Activated CD4-positive, alpha-beta T cell treated with anti-CD3 and anti-CD28 coated beads for 36 hours (primary cell): ENCODE measurements at regions of chr6 and their contacts with region 1.

Region 1: GRCh38 chr6:68876792-68877493 is 241.9 kb downstream of the ADGRB3 start:
- DNase-seq: no peak
- ATAC-seq: no peak
- H3K4me3 Mint-ChIP-seq: no peak overlapping the region
- H3K27ac Mint-ChIP-seq: no peak overlapping the region
- H3K4me1 Mint-ChIP-seq: no peaks in the 10 kb centered on the region
- H3K27me3 Mint-ChIP-seq: no peaks in the 10 kb centered on the region

Region 2: GRCh38 chr6:68967549-68968300 is 90.8 kb after region 1 on chr6:
- CTCF ChIA-PET with region 1: no interaction called
- POLR2A ChIA-PET with region 1: no interaction called
- intact Hi-C with region 1: loop called in 1 of 2 experiments (anchors 2 kb)
- DNase-seq: peak; percentile 74
- ATAC-seq: peak; percentile 68
- H3K4me3 Mint-ChIP-seq: no peak overlapping the region
- H3K27ac Mint-ChIP-seq: no peak overlapping the region
- H3K4me1 Mint-ChIP-seq: peaks cover 11% of the 10 kb centered on the region
- H3K27me3 Mint-ChIP-seq: no peaks in the 10 kb centered on the region

Region 3: DNA sequence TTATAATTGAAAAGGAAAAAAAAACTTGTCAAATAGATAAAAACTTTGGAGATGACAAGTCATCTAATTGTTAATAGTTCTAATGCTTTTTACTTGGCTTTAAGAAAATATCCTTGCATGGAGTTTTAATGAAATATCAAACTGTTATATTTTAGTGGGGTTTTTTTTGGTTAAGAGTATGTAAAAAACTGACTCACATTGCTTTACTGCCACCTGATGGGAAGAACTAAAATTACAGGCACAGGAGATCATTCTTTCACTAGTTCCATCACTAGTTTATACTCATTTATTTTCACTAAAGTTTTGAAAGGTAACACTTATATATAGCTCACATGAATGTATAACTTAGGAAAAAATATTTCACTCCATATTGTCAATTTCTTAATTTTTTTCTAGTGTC is 610.7 kb after region 1 on chr6:
- CTCF ChIA-PET with region 1: no interaction called
- POLR2A ChIA-PET with region 1: no interaction called
- intact Hi-C with region 1: loop called in 1 of 2 experiments (anchors 5 kb)
- DNase-seq: no peak
- ATAC-seq: no peak
- H3K4me3 Mint-ChIP-seq: no peak overlapping the region
- H3K27ac Mint-ChIP-seq: no peak overlapping the region
- H3K4me1 Mint-ChIP-seq: no peaks in the 10 kb centered on the region
- H3K27me3 Mint-ChIP-seq: no peaks in the 10 kb centered on the region

Region 4: DNA sequence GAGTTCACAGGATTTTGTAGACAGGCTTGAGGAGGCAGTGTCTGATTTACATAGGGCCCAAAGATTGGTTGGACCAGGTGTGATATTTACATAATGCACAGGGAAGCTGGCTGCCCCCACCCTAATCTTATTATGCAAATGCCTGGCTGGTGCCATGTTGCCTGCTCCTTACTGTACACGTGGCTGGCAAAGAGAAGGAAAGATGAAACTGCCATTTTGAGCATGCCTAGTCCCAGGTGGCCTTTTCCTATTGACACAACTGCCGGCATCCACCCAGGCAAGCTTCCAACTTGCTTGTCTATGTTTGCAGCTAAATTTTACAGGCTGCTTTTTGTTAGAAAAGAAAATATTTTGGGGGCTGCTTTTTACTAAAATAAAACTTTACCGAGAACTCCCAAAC is 745.3 kb after region 1 on chr6:
- CTCF ChIA-PET with region 1: no interaction called
- POLR2A ChIA-PET with region 1: no interaction called
- intact Hi-C with region 1: no loop called
- DNase-seq: no peak
- ATAC-seq: no peak
- H3K4me3 Mint-ChIP-seq: no peak overlapping the region
- H3K27ac Mint-ChIP-seq: no peak overlapping the region
- H3K4me1 Mint-ChIP-seq: no peaks in the 10 kb centered on the region
- H3K27me3 Mint-ChIP-seq: peaks cover 7% of the 10 kb centered on the region

Region 5: GRCh38 chr6:69732640-69733039 is 855.7 kb after region 1 on chr6:
- CTCF ChIA-PET with region 1: no interaction called
- POLR2A ChIA-PET with region 1: no interaction called
- intact Hi-C with region 1: loop called in 1 of 2 experiments (anchors 5 kb)
- DNase-seq: no peak
- ATAC-seq: no peak
- H3K4me3 Mint-ChIP-seq: no peak overlapping the region
- H3K27ac Mint-ChIP-seq: no peak overlapping the region
- H3K4me1 Mint-ChIP-seq: no peaks in the 10 kb centered on the region
- H3K27me3 Mint-ChIP-seq: no peaks in the 10 kb centered on the region